GM12878 (cell line): ENCODE measurements at regions of chr15 and their contacts with region 1.

Region 1: GRCh38 chr15:58182460-58183163 is 44.4 kb downstream of the AQP9 start:
- DNase-seq: no peak
- ATAC-seq: peak; percentile 94
- H3K4me3 ChIP-seq: no peak overlapping the region
- H3K27ac ChIP-seq: no peak overlapping the region
- H3K4me1 ChIP-seq: no peaks in the 10 kb centered on the region
- H3K27me3 ChIP-seq: no peaks in the 10 kb centered on the region
- CTCF ChIP-seq: peak; percentile 79 to 88 (median 80); a peak in 5 of 6 replicates
- EP300 ChIP-seq: no peak
- POLR2A ChIP-seq: no peak
- RAD21 ChIP-seq: peak; percentile 80

Region 2: GRCh38 chr15:57743424-57743823 is 439.2 kb before region 1 on chr15:
- CTCF ChIA-PET with region 1: no interaction called
- POLR2A ChIA-PET with region 1: no interaction called
- RAD21 ChIA-PET with region 1: no interaction called
- SMC1A ChIA-PET with region 1: no interaction called
- in situ Hi-C with region 1: loop called (anchors 10 kb)
- intact Hi-C with region 1: no loop called
- DNase-seq: no peak
- ATAC-seq: peak; percentile 43; the same call in 1 of the 3 replicates
- H3K4me3 ChIP-seq: no peak overlapping the region
- H3K27ac ChIP-seq: no peak overlapping the region
- H3K4me1 ChIP-seq: no peaks in the 10 kb centered on the region
- H3K27me3 ChIP-seq: no peaks in the 10 kb centered on the region; a peak in 1 of 4 replicates
- CTCF ChIP-seq: peak; percentile 6 to 32 (median 23); a peak in 3 of 6 replicates
- EP300 ChIP-seq: no peak
- POLR2A ChIP-seq: no peak
- RAD21 ChIP-seq: peak; percentile 8; the same call in 1 of the 2 replicates

Region 3: GRCh38 chr15:57866149-57866736 is 316.4 kb before region 1 on chr15:
- CTCF ChIA-PET with region 1: interaction called, 15 read pairs
- POLR2A ChIA-PET with region 1: no interaction called
- RAD21 ChIA-PET with region 1: no interaction called
- SMC1A ChIA-PET with region 1: no interaction called
- in situ Hi-C with region 1: loop called (anchors 5 kb)
- intact Hi-C with region 1: loop called (anchors 1 kb)
- DNase-seq: no peak
- ATAC-seq: peak; percentile 79
- H3K4me3 ChIP-seq: no peak overlapping the region
- H3K27ac ChIP-seq: no peak overlapping the region
- H3K4me1 ChIP-seq: no peaks in the 10 kb centered on the region
- H3K27me3 ChIP-seq: no peaks in the 10 kb centered on the region
- CTCF ChIP-seq: peak; percentile 66 to 84 (median 74)
- EP300 ChIP-seq: no peak
- POLR2A ChIP-seq: no peak
- RAD21 ChIP-seq: peak; percentile 59

Region 4: GRCh38 chr15:58043192-58043903 is 139.3 kb before region 1 on chr15:
- CTCF ChIA-PET with region 1: interaction called, 7 read pairs
- POLR2A ChIA-PET with region 1: no interaction called
- RAD21 ChIA-PET with region 1: no interaction called
- SMC1A ChIA-PET with region 1: interaction called, 3 read pairs
- in situ Hi-C with region 1: no loop called
- intact Hi-C with region 1: loop called (anchors 2 kb)
- DNase-seq: no peak
- ATAC-seq: peak; percentile 76
- H3K4me3 ChIP-seq: no peak overlapping the region
- H3K27ac ChIP-seq: no peak overlapping the region
- H3K4me1 ChIP-seq: no peaks in the 10 kb centered on the region
- H3K27me3 ChIP-seq: no peaks in the 10 kb centered on the region; a peak in 2 of 4 replicates
- CTCF ChIP-seq: peak; percentile 62 to 74 (median 68)
- EP300 ChIP-seq: no peak
- POLR2A ChIP-seq: no peak
- RAD21 ChIP-seq: peak; percentile 48

Region 5: DNA sequence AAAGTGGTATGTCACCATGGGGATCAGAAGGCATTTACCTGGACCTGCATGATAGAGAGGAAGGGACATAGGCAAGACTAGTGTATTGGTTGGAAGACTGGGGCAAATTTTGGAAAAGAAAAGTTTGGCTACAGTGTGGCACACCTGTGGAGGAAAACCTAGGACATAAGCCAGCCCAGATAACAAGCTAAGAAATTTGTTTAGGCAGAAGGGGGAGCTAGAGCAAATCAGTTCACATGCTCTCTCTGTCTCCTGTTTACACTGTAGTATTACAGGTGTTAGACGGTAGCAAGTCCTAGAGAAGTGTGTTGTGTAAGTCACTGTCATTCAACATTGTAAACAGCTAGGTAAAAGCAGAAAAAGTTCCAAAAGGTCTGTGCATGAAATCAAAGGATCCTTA is 105.2 kb before region 1 on chr15:
- CTCF ChIA-PET with region 1: interaction called, 51 read pairs
- POLR2A ChIA-PET with region 1: no interaction called
- RAD21 ChIA-PET with region 1: interaction called, 5 read pairs
- SMC1A ChIA-PET with region 1: interaction called, 9 read pairs
- in situ Hi-C with region 1: no loop called
- intact Hi-C with region 1: loop called (anchors 1 kb)
- DNase-seq: no peak
- ATAC-seq: peak; percentile 40; the same call in 2 of the 3 replicates
- H3K4me3 ChIP-seq: no peak overlapping the region
- H3K27ac ChIP-seq: no peak overlapping the region
- H3K4me1 ChIP-seq: no peaks in the 10 kb centered on the region
- H3K27me3 ChIP-seq: peaks cover 1 to 2% of the 10 kb centered on the region in 2 experiments; a peak in 2 of 4 replicates
- CTCF ChIP-seq: peak in 1 of 3 experiments; percentile 41; a peak in 2 of 6 replicates
- EP300 ChIP-seq: no peak
- POLR2A ChIP-seq: no peak
- RAD21 ChIP-seq: peak; percentile 21; the same call in 1 of the 2 replicates

Region 6: DNA sequence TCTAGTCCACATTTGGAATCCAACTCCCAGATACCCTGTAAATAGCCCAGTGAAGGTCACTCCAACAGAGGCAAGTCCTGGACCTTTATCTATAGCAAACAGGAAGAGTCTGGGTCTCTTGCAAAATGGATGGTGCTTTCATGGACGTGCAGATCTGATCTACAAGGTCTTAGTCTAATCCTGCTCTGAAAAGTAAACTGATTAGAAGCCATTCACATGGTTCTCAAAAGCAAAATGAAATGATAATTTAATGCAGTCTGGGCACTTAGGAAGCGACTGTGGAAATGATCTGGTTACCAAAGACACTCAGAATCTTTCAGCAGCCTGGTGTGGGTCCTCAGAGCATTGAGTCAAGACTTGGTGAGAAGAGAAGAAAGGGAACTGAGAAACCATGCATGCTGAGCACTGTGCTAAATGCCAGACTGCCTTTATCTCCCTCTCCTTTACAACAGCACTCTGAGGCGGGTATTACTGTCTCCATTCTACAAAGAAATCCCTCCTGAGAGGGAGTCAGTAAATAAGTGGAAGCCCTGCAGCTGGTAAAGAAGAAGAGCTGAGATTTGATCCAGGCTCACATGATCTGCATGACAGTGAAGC is 15.4 kb before region 1 on chr15:
- CTCF ChIA-PET with region 1: interaction called, 11 read pairs
- POLR2A ChIA-PET with region 1: no interaction called
- RAD21 ChIA-PET with region 1: no interaction called
- SMC1A ChIA-PET with region 1: no interaction called
- in situ Hi-C with region 1: no loop called
- intact Hi-C with region 1: no loop called
- DNase-seq: no peak
- ATAC-seq: peak; percentile 75
- H3K4me3 ChIP-seq: no peak overlapping the region
- H3K27ac ChIP-seq: no peak overlapping the region
- H3K4me1 ChIP-seq: no peaks in the 10 kb centered on the region
- H3K27me3 ChIP-seq: no peaks in the 10 kb centered on the region; a peak in 2 of 4 replicates
- CTCF ChIP-seq: no peak
- EP300 ChIP-seq: no peak
- POLR2A ChIP-seq: no peak
- RAD21 ChIP-seq: no peak

Region 7: DNA sequence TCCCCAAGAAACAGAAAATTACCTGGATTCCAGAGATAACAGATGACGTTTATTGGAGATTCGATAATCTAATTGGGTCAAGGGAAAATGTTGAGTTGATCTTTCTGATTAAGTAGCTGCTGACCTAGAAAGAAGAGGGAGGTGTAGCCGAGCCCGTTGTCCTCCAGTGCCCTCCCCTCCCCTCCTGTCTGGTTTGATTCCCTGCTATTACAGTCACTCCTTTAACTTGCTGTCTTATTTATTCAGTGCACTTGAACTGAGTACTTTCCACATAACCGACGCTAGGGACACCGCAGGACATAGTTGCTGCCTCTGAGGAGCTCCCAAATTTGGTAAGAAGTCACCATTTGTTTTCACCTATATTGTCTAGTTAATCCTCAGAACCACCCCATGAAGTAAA is 59.3 kb after region 1 on chr15:
- CTCF ChIA-PET with region 1: no interaction called
- POLR2A ChIA-PET with region 1: no interaction called
- RAD21 ChIA-PET with region 1: no interaction called
- SMC1A ChIA-PET with region 1: no interaction called
- in situ Hi-C with region 1: no loop called
- intact Hi-C with region 1: no loop called
- DNase-seq: no peak
- ATAC-seq: no peak
- H3K4me3 ChIP-seq: no peak overlapping the region
- H3K27ac ChIP-seq: no peak overlapping the region
- H3K4me1 ChIP-seq: no peaks in the 10 kb centered on the region; the same call in 1 of the 2 replicates
- H3K27me3 ChIP-seq: no peaks in the 10 kb centered on the region
- CTCF ChIP-seq: no peak
- EP300 ChIP-seq: no peak
- POLR2A ChIP-seq: no peak
- RAD21 ChIP-seq: no peak